ENCODE measurements at regions of chr3 and their contacts with region 1.

Region 1: GRCh38 chr3:125165189-125165947 is 47.2 kb downstream of the SLC12A8 start:
- DNase-seq: no peak
- H3K4me3 ChIP-seq: no peak overlapping the region
- H3K27ac ChIP-seq: no peak overlapping the region
- H3K4me1 ChIP-seq: no peaks in the 10 kb centered on the region
- H3K27me3 ChIP-seq: no peaks in the 10 kb centered on the region
- CTCF ChIP-seq: peak; percentile 22 to 65 (median 50)
- POLR2A ChIP-seq: no peak

Region 2: GRCh38 chr3:124935264-124935663 is 230.1 kb before region 1 on chr3:
- intact Hi-C with region 1: loop called (anchors 10 kb)
- DNase-seq: no peak
- H3K4me3 ChIP-seq: no peak overlapping the region
- H3K27ac ChIP-seq: no peak overlapping the region
- H3K4me1 ChIP-seq: no peaks in the 10 kb centered on the region
- H3K27me3 ChIP-seq: no peaks in the 10 kb centered on the region
- CTCF ChIP-seq: no peak
- POLR2A ChIP-seq: no peak

Region 3: GRCh38 chr3:125024817-125025216 is 140.6 kb before region 1 on chr3:
- intact Hi-C with region 1: no loop called
- DNase-seq: no peak
- H3K4me3 ChIP-seq: no peak overlapping the region
- H3K27ac ChIP-seq: peak overlapping the region; percentile 2 to 48
- H3K4me1 ChIP-seq: no peaks in the 10 kb centered on the region
- H3K27me3 ChIP-seq: no peaks in the 10 kb centered on the region
- CTCF ChIP-seq: no peak
- POLR2A ChIP-seq: no peak

Region 4: DNA sequence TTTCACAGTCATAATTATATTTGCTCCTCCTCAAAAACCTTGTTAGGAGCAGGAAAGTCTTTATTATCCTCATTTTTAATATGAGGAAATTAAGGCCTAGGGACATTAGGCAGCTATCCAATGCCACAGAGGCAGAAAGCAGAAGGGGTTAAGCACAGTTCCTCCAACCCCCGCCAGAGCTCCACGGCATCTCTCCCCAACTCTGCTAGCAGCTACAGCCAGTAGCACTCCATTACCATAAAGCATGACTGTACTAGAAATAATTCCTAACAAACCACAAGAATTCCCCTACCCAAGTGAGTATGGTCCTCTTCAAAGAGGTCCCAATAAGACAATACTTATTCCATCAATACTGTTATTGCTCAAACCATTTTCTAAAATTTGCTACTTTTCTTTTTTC is 119.4 kb before region 1 on chr3:
- intact Hi-C with region 1: no loop called
- DNase-seq: no peak
- H3K4me3 ChIP-seq: no peak overlapping the region
- H3K27ac ChIP-seq: peak overlapping the region in 1 of 2 donors; percentile 84
- H3K4me1 ChIP-seq: peaks cover 5 to 6% of the 10 kb centered on the region in 2 donors
- H3K27me3 ChIP-seq: no peaks in the 10 kb centered on the region
- CTCF ChIP-seq: no peak
- POLR2A ChIP-seq: no peak

Region 5: GRCh38 chr3:125220727-125221429 is 55.5 kb after region 1 on chr3:
- intact Hi-C with region 1: no loop called
- DNase-seq: no peak
- H3K4me3 ChIP-seq: no peak overlapping the region
- H3K27ac ChIP-seq: no peak overlapping the region
- H3K4me1 ChIP-seq: no peaks in the 10 kb centered on the region
- H3K27me3 ChIP-seq: no peaks in the 10 kb centered on the region
- CTCF ChIP-seq: no peak
- POLR2A ChIP-seq: no peak

Region 6: GRCh38 chr3:125257536-125257935 is 92.2 kb after region 1 on chr3:
- intact Hi-C with region 1: no loop called
- DNase-seq: no peak
- H3K4me3 ChIP-seq: no peak overlapping the region
- H3K27ac ChIP-seq: no peak overlapping the region
- H3K4me1 ChIP-seq: no peaks in the 10 kb centered on the region
- H3K27me3 ChIP-seq: no peaks in the 10 kb centered on the region
- CTCF ChIP-seq: no peak
- POLR2A ChIP-seq: no peak